Psoas muscle (tissue), 8 donors: ENCODE measurements at regions of chr5 and their contacts with region 1.

Region 1: DNA sequence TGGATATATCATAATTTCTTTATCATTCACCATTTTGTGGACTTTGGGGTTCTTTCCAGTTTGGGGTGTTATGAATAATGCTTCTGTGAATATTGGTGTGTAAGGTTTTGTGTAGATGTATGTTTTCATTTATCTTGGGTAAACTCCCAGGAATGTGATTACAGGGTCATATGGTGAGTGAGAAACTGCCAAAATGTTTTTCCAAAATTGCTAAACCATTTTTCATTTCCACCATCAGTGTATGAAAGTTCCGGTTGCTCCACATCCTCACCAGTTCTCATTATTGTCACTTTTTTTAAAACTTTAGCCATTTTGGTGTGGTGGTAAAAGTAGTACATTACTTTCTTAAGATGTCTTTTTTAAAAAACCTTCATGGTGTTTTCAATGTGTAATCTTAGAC is 152.9 kb downstream of the NIPBL start:
- DNase-seq: no peak
- ATAC-seq: no peak
- H3K4me3 ChIP-seq: no peak overlapping the region
- H3K27ac ChIP-seq: no peak overlapping the region
- H3K4me1 ChIP-seq: no peaks in the 10 kb centered on the region
- H3K27me3 ChIP-seq: no peaks in the 10 kb centered on the region
- CTCF ChIP-seq: no peak

Region 2: DNA sequence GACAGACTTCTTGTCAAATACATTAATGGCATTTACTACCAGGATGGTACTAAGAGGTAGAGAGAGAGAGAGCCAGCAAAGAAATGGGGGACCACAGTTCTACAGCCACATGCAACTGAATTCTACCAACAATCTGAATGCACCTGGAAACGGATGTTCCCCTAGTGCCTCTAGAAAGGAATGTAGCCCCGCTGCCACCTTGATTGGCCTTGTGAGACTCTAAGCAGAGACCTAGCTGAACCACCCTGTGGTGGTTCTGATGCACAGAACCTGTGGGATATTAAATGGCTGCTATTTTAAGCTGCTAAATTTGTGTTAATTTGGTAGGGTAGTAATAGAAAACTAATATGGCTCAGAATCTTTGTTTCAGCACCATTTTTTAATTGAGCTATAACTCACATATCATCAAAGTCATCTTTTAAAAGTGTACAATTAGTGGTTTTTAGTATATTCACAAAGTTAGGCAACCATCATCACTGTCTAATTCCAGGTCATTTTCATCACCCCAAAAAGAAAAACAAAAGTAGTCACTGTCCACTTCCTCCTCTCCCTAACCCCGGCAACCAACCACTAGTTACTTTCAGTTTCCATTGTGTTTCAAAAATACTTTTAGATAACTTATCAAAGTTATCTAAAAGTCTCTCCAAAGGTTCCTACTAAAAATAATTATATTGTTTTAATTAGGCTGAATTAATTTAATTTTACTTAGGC is 168.1 kb after region 1 on chr5:
- intact Hi-C with region 1: loop called in 1 of 2 experiments (anchors 10 kb)
- DNase-seq: no peak
- ATAC-seq: no peak
- H3K4me3 ChIP-seq: no peak overlapping the region
- H3K27ac ChIP-seq: no peak overlapping the region
- H3K4me1 ChIP-seq: no peaks in the 10 kb centered on the region
- H3K27me3 ChIP-seq: no peaks in the 10 kb centered on the region
- CTCF ChIP-seq: no peak

Region 3: GRCh38 chr5:37319037-37319782 is 289.8 kb after region 1 on chr5:
- intact Hi-C with region 1: loop called in 1 of 2 experiments (anchors 10 kb)
- DNase-seq: no peak
- ATAC-seq: no peak
- H3K4me3 ChIP-seq: no peak overlapping the region
- H3K27ac ChIP-seq: no peak overlapping the region
- H3K4me1 ChIP-seq: no peaks in the 10 kb centered on the region
- H3K27me3 ChIP-seq: no peaks in the 10 kb centered on the region
- CTCF ChIP-seq: no peak

Region 4: DNA sequence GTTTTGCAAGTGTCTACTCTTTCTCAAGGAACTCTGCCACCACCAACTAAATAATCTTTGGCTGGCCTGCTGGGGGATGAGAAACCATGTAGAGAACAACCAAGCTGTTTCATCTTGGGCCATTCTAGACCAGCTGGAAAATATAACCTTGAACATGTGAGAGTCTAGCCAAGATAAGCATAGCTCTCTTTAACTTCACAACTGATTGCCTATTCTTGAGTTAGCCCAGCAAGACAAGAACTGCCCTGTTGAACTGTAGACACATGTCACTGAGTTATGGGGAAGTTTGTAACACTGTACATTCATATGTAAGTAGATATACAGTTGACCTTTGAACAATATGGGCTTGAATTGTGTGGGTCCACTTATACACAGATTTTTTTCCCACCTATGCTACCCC is 297.1 kb after region 1 on chr5:
- intact Hi-C with region 1: loop called in 1 of 2 experiments (anchors 10 kb)
- DNase-seq: no peak
- ATAC-seq: no peak
- H3K4me3 ChIP-seq: no peak overlapping the region
- H3K27ac ChIP-seq: no peak overlapping the region
- H3K4me1 ChIP-seq: no peaks in the 10 kb centered on the region
- H3K27me3 ChIP-seq: no peaks in the 10 kb centered on the region
- CTCF ChIP-seq: no peak